Breast epithelium (tissue), 4 donors: ENCODE measurements at regions of chr2 and their contacts with region 1.

Region 1: DNA sequence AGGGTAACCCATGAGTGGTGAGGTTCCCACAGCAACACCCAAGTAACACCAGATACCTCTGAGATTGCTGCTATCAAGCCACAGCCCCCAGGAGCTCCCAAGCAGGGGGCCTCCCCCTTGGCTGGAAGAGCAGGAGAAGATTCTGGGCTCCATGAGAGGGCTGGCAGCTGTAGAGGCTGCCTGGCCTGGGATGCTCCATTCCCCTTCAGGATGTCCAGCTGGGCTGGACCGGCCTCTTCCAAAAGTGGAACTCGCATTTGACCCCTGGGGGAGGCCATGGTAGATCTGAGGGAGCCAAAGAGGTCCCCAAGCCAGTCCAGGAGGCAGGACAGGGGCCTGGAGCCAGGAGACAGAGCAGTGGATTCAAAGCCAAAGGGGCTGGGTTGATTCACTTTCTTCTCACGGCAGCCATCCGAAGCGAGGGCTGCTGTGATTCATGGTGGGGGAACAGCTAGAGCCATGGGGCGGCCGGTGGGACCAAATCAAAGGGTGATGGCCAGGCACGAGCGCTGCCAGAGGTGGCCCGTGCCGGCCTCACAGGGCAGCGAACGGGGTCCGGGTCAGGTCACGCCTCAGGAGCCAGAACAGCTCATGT is 95.3 kb upstream of the ID2 start:
- DNase-seq: no peak
- H3K4me3 ChIP-seq: no peak overlapping the region
- H3K27ac ChIP-seq: no peak overlapping the region
- H3K4me1 ChIP-seq: no peaks in the 10 kb centered on the region
- H3K27me3 ChIP-seq: no peaks in the 10 kb centered on the region
- CTCF ChIP-seq: no peak
- POLR2A ChIP-seq: no peak

Region 2: GRCh38 chr2:8606226-8606625 is 19.7 kb after region 1 on chr2:
- intact Hi-C with region 1: no loop called
- DNase-seq: no peak
- H3K4me3 ChIP-seq: no peak overlapping the region
- H3K27ac ChIP-seq: no peak overlapping the region
- H3K4me1 ChIP-seq: no peaks in the 10 kb centered on the region
- H3K27me3 ChIP-seq: no peaks in the 10 kb centered on the region
- CTCF ChIP-seq: no peak
- POLR2A ChIP-seq: no peak

Region 3: DNA sequence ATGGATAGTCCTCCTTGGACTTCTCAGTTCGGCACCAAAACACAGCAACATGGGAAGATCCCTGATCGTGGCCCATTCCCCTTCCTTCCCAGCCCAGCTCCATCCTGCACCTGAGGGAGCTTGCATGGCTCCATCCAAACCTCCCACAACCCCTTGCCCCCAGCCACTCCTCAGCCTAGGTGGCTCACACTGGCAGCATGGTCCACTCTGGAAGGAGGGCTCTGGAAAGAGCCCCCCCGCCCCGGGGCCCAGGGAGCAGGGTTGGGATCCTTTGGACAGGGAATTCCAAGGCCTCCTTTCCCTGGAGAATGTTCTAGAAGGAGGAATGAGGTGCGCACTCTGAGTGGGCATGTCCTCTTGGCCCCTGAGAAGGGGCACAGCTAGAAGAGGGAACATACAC is 32.5 kb after region 1 on chr2:
- intact Hi-C with region 1: loop called (anchors 1 kb)
- DNase-seq: no peak
- H3K4me3 ChIP-seq: no peak overlapping the region
- H3K27ac ChIP-seq: no peak overlapping the region
- H3K4me1 ChIP-seq: no peaks in the 10 kb centered on the region
- H3K27me3 ChIP-seq: no peaks in the 10 kb centered on the region
- CTCF ChIP-seq: no peak
- POLR2A ChIP-seq: no peak

Region 4: GRCh38 chr2:9753276-9753600 is 1166.7 kb after region 1 on chr2:
- intact Hi-C with region 1: no loop called
- DNase-seq: no peak
- H3K4me3 ChIP-seq: peak overlapping the region in 2 of 3 donors; percentile 36 to 57
- H3K27ac ChIP-seq: peak overlapping the region; percentile 69 to 79
- H3K4me1 ChIP-seq: peaks cover 0 to 4% of the 10 kb centered on the region in 2 donors
- H3K27me3 ChIP-seq: no peaks in the 10 kb centered on the region
- CTCF ChIP-seq: no peak
- POLR2A ChIP-seq: no peak